ENCODE measurements at regions of chr9 and their contacts with region 1.

Region 1: GRCh38 chr9:83538172-83538889 is at the start of gene FRMD3:
- DNase-seq: peak; percentile 88 to 91
- ATAC-seq: peak; percentile 91 to 99 (median 96)
- H3K4me3 ChIP-seq: peak within 1 kb of the TSS; percentile 62 to 87 (median 72)
- H3K27ac ChIP-seq: peak within 1 kb of the TSS; percentile 78 to 89 (median 84)
- H3K4me1 ChIP-seq: peaks cover 3 to 24% (median 21%) of the 10 kb centered on the region in 9 donors
- H3K27me3 ChIP-seq: peaks cover 0 to 17% (median 0%) of the 10 kb centered on the region in 7 donors
- CTCF ChIP-seq: peak; percentile 70 to 97 (median 84)
- total RNA-seq, gene FRMD3: 60.5 to 145 (median 113) TPM

Region 2: GRCh38 chr9:83384214-83384613 is 154.1 kb before region 1 on chr9:
- intact Hi-C with region 1: no loop called
- DNase-seq: no peak
- ATAC-seq: no peak
- H3K4me3 ChIP-seq: no peak overlapping the region
- H3K27ac ChIP-seq: no peak overlapping the region
- H3K4me1 ChIP-seq: peaks cover 0 to 16% (median 0%) of the 10 kb centered on the region in 9 donors
- H3K27me3 ChIP-seq: no peaks in the 10 kb centered on the region
- CTCF ChIP-seq: no peak

Region 3: DNA sequence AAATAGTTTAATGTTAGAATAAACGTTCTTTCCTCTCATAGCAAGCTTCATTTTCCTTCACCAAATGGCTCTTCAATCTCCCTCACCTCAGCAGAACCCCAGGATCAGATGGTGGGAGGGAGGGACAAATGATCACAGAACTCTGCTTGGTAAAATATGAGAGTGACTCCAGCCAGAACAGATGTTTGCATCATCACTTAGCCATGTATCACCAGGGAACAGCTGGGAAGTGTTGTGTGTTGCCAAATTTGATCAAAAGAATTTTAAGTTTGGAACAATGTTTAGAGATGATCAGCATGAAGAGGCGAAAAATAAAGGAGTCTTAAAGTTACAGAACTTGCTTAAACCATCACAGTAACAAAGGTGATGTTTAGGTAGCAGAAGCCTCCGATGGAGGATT is 115.8 kb before region 1 on chr9:
- intact Hi-C with region 1: loop called in 1 of 10 experiments (anchors 10 kb)
- DNase-seq: peak in 1 of 2 donors; percentile 26
- ATAC-seq: peak in 7 of 8 donors; percentile 62 to 88 (median 71)
- H3K4me3 ChIP-seq: no peak overlapping the region
- H3K27ac ChIP-seq: peak overlapping the region in 3 of 10 donors; percentile 0 to 30 (median 6)
- H3K4me1 ChIP-seq: peaks cover 0 to 47% (median 13%) of the 10 kb centered on the region in 9 donors
- H3K27me3 ChIP-seq: no peaks in the 10 kb centered on the region
- CTCF ChIP-seq: no peak

Region 4: DNA sequence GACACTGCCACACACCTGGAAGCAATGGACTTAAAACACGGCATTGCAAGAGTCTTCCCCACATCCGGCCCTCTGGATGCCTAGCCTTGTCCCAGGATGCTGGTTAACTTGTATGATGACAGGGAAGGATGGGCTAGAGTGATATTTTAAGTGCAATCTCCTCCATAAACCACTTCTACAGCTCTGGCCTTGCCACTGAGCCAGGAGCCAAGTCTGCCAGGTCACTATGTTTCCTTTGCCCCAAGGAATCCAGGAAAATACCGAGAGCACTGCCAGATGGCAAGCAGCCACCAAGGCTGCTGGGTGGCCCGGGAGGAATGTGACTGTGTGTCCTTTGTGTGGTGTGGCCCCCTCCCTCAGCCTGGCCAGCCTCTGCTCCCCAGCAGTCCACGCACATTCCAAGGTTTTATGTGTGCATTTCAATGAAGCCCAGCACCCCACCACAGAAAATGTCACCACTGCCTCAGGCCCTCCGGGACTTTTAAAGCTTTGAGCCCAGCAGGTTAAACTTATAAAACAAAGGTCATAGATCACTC is 106.2 kb before region 1 on chr9:
- intact Hi-C with region 1: loop called in 2 of 10 experiments (anchors 5 to 10 kb)
- DNase-seq: peak; percentile 69 to 81
- ATAC-seq: peak; percentile 59 to 95 (median 87)
- H3K4me3 ChIP-seq: no peak overlapping the region
- H3K27ac ChIP-seq: peak overlapping the region in 8 of 10 donors; percentile 7 to 70 (median 38)
- H3K4me1 ChIP-seq: peaks cover 10 to 48% (median 32%) of the 10 kb centered on the region in 9 donors
- H3K27me3 ChIP-seq: no peaks in the 10 kb centered on the region
- CTCF ChIP-seq: no peak

Region 5: DNA sequence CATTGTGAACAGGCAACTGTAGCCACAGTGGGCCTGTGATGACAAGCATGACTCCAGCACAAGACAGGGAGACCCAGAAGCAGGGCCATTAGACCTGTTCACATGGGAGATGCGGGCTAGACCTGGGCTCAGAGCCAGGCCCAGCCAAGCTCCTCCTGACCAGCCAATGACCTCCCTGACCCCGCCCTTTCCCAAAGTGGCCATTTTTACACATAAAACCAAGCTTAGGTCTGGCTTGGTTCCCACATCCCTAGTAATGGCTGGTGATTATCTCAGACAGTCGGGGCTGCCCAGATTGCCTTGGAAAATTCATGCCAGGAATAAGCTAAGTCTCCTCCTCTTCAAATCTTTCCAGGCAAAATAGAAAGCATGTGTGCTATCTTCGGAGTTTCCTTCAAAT is 94.2 kb before region 1 on chr9:
- intact Hi-C with region 1: loop called in 1 of 10 experiments (anchors 10 kb)
- DNase-seq: peak; percentile 66 to 67
- ATAC-seq: peak; percentile 58 to 80 (median 64)
- H3K4me3 ChIP-seq: no peak overlapping the region
- H3K27ac ChIP-seq: peak overlapping the region in 7 of 10 donors; percentile 3 to 61 (median 32)
- H3K4me1 ChIP-seq: peaks cover 4 to 65% (median 33%) of the 10 kb centered on the region in 9 donors
- H3K27me3 ChIP-seq: no peaks in the 10 kb centered on the region
- CTCF ChIP-seq: no peak

Region 6: DNA sequence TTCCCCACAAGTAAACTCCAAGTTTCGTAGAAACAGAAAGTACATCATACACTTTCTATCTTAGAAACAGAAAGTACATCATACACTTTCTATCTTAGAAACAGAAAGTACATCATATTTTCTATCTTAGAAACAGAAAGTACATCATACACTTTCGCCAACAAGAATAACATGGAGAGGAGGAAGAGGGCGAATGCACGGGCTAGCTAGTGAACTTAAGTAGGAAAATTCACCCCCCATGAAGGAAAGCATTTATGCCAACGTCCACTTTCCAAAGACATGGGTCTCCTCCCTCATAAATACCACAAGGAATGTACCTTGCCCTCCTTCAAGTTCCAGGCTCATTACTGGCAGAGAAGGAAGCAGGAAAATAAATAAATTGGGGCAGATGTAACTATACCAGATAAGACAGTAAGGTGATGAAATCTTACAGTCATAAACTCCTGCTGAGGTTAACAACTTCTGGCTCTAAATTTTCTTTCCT is 64.8 kb before region 1 on chr9:
- intact Hi-C with region 1: loop called in 4 of 10 experiments (anchors 2 to 5 kb)
- DNase-seq: no peak
- ATAC-seq: peak in 3 of 8 donors; percentile 31 to 43 (median 43)
- H3K4me3 ChIP-seq: peak overlapping the region in 6 of 10 donors; percentile 16 to 31 (median 23)
- H3K27ac ChIP-seq: peak overlapping the region in 9 of 10 donors; percentile 25 to 85 (median 74)
- H3K4me1 ChIP-seq: peaks cover 0 to 52% (median 35%) of the 10 kb centered on the region in 9 donors
- H3K27me3 ChIP-seq: no peaks in the 10 kb centered on the region
- CTCF ChIP-seq: no peak

Measured in heart right ventricle (tissue), 16 donors.